ENCODE measurements at regions of chr10 and their contacts with region 1.

Region 1: GRCh38 chr10:33155720-33156638 is 178.5 kb downstream of the NRP1 start:
- DNase-seq: no peak
- H3K4me3 ChIP-seq: no peak overlapping the region
- H3K27ac ChIP-seq: peak overlapping the region in 1 of 4 donors; percentile 9
- H3K4me1 ChIP-seq: peaks cover 0 to 20% (median 10%) of the 10 kb centered on the region in 3 donors
- H3K27me3 ChIP-seq: no peaks in the 10 kb centered on the region
- CTCF ChIP-seq: peak; percentile 19 to 80 (median 60)
- POLR2A ChIP-seq: no peak

Region 2: GRCh38 chr10:33025039-33025438 is 130.9 kb before region 1 on chr10:
- intact Hi-C with region 1: loop called (anchors 10 kb)
- DNase-seq: no peak
- H3K4me3 ChIP-seq: no peak overlapping the region
- H3K27ac ChIP-seq: no peak overlapping the region
- H3K4me1 ChIP-seq: peaks cover 0 to 10% (median 5%) of the 10 kb centered on the region in 3 donors
- H3K27me3 ChIP-seq: no peaks in the 10 kb centered on the region
- CTCF ChIP-seq: no peak
- POLR2A ChIP-seq: no peak